ENCODE measurements at regions of chr2 and their contacts with region 1.

Region 1: DNA sequence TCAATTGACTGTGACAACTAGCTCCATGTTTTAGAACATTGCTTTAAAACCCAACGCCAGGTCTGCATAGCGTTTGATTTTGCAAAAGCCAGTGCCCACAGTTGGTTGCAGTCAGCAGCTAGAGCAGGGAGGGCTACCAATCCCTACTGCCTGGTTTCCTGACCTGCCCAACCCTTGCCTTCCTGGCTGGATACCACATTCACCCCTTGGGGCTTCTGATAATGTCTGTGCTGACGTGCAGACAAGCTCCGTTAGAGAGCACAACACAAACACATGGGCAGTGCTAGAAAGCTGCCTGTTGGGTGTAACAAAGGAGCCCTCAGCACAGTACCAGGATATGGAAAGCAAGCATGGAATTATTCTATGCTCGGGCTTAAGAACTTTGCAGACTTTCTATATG is 71.4 kb upstream of the THSD7B start:
- DNase-seq: no peak
- ATAC-seq: no peak
- H3K4me3 ChIP-seq: no peak overlapping the region
- H3K4me3 Mint-ChIP-seq: no peak overlapping the region
- H3K27ac ChIP-seq: no peak overlapping the region
- H3K27ac Mint-ChIP-seq: no peak overlapping the region
- H3K4me1 ChIP-seq: no peaks in the 10 kb centered on the region
- H3K4me1 Mint-ChIP-seq: no peaks in the 10 kb centered on the region
- H3K27me3 ChIP-seq: no peaks in the 10 kb centered on the region
- H3K27me3 Mint-ChIP-seq: no peaks in the 10 kb centered on the region

Region 2: GRCh38 chr2:136538489-136538888 is 155.5 kb before region 1 on chr2:
- CTCF ChIA-PET with region 1: no interaction called
- POLR2A ChIA-PET with region 1: no interaction called
- DNase-seq: no peak
- ATAC-seq: no peak
- H3K4me3 ChIP-seq: no peak overlapping the region
- H3K4me3 Mint-ChIP-seq: no peak overlapping the region
- H3K27ac ChIP-seq: no peak overlapping the region
- H3K27ac Mint-ChIP-seq: no peak overlapping the region
- H3K4me1 ChIP-seq: no peaks in the 10 kb centered on the region
- H3K4me1 Mint-ChIP-seq: no peaks in the 10 kb centered on the region
- H3K27me3 ChIP-seq: peaks cover 0 to 3% of the 10 kb centered on the region in 2 experiments
- H3K27me3 Mint-ChIP-seq: peaks cover 13 to 22% of the 10 kb centered on the region in 2 donors

Region 3: GRCh38 chr2:137992039-137992646 is 1298.2 kb after region 1 on chr2:
- CTCF ChIA-PET with region 1: interaction called in 1 of 2 experiments, 12 read pairs
- POLR2A ChIA-PET with region 1: no interaction called
- DNase-seq: no peak
- ATAC-seq: no peak
- H3K4me3 ChIP-seq: no peak overlapping the region
- H3K4me3 Mint-ChIP-seq: no peak overlapping the region
- H3K27ac ChIP-seq: no peak overlapping the region
- H3K27ac Mint-ChIP-seq: no peak overlapping the region
- H3K4me1 ChIP-seq: no peaks in the 10 kb centered on the region
- H3K4me1 Mint-ChIP-seq: no peaks in the 10 kb centered on the region
- H3K27me3 ChIP-seq: peaks cover 0 to 11% of the 10 kb centered on the region in 2 experiments
- H3K27me3 Mint-ChIP-seq: no peaks in the 10 kb centered on the region